Activated CD8-positive, alpha-beta T cell treated with anti-CD3 and anti-CD28 coated beads for 36 hours (primary cell): ENCODE measurements at regions of chr11 and their contacts with region 1.

Region 1: GRCh38 chr11:114075891-114076441 is 16.5 kb downstream of the ZBTB16 start:
- DNase-seq: peak; percentile 54
- ATAC-seq: peak; percentile 22
- H3K4me3 Mint-ChIP-seq: peak overlapping the region; percentile 26
- H3K27ac Mint-ChIP-seq: peak overlapping the region; percentile 37
- H3K4me1 Mint-ChIP-seq: peaks cover 65% of the 10 kb centered on the region
- H3K27me3 Mint-ChIP-seq: no peaks in the 10 kb centered on the region
- CTCF ChIP-seq: peak; percentile 67

Region 2: DNA sequence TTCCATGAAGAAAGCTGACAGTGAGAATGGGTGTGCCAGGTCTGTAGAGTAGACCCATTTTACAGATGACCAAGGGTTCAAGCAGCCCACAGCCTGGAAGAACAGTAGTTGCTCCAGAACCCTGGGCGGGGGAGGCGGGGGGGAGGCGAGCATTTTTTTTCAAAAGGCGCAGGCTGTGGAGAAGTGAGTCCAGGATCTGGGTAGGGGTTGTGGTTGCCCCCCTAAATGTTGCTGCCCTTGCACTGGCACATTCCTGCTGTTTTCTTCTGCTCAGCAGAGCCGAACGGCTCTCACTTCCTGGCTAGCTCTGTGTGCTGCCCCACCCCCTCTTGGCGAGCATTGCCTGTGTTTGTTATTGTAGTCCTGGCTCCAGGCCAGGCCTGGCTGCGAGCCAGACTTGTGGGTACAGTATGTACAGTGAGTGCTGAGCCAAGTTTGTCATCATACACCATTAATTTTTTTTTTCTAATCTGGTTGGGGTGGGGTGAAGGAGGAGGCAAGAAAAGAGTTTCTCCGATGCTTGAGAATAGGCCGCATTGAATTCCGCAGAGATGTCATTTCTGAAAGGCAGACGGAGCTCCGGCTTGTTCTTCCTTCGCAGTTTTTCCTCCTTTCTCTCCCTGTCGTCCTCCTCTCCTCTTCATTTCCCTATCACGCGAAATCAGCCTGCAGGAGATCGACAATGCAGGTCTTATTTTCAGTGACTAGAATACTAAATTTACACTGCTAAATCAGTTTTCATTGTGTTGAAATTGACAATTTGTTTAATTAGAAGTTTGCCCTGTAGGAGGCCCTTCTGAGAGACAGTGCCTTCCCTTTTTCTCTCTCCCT is 84.1 kb after region 1 on chr11:
- CTCF ChIA-PET with region 1: no interaction called
- POLR2A ChIA-PET with region 1: no interaction called
- intact Hi-C with region 1: loop called (anchors 10 kb)
- DNase-seq: peak; percentile 97
- ATAC-seq: peak; percentile 85
- H3K4me3 Mint-ChIP-seq: peak overlapping the region; percentile 47
- H3K27ac Mint-ChIP-seq: peak overlapping the region; percentile 55
- H3K4me1 Mint-ChIP-seq: peaks cover 63% of the 10 kb centered on the region
- H3K27me3 Mint-ChIP-seq: no peaks in the 10 kb centered on the region
- CTCF ChIP-seq: no peak